Ascending aorta (tissue), 2 donors: ENCODE measurements at regions of chr3 and their contacts with region 1.

Region 1: DNA sequence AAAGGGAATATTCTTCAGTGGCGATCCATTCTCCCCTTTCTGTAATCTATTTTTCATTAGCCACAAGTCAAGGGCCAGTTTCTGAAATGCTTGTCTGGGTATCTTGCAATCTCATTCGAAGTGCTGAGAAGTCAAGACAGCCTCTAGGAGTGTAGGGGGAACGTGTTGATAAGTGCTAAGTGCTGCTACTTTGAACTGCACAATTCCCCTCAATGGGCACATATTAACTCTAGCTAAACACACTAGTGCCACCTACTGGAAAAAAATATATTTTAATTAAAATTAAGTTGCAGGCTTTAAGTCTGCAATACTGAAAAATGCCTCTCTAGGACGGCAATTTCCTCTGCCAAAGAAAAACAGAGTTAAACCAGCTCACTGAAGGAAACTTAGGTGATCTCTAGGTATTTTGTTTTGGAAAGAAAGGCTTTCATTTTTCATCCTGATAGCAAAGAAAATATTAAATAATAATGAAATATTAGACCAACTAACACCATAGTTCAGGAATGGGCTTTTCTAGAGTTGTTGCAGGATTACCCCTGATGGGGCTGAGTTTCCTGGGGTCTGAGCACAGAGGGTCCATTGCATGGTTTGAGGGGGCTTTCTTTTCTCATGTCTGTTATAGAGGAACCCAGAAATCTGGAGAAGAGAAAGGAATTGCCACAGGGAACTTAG is 181.9 kb upstream of the KBTBD8 start:
- DNase-seq: no peak
- H3K4me3 ChIP-seq: no peak overlapping the region
- H3K27ac ChIP-seq: no peak overlapping the region
- H3K4me1 ChIP-seq: no peaks in the 10 kb centered on the region
- H3K27me3 ChIP-seq: no peaks in the 10 kb centered on the region
- CTCF ChIP-seq: peak; percentile 48 to 73 (median 65)

Region 2: GRCh38 chr3:66253790-66254620 is 562.2 kb before region 1 on chr3:
- intact Hi-C with region 1: loop called (anchors 1 kb)
- DNase-seq: no peak
- H3K4me3 ChIP-seq: no peak overlapping the region
- H3K27ac ChIP-seq: no peak overlapping the region
- H3K4me1 ChIP-seq: no peaks in the 10 kb centered on the region
- H3K27me3 ChIP-seq: no peaks in the 10 kb centered on the region
- CTCF ChIP-seq: peak; percentile 68 to 81 (median 75)

Region 3: DNA sequence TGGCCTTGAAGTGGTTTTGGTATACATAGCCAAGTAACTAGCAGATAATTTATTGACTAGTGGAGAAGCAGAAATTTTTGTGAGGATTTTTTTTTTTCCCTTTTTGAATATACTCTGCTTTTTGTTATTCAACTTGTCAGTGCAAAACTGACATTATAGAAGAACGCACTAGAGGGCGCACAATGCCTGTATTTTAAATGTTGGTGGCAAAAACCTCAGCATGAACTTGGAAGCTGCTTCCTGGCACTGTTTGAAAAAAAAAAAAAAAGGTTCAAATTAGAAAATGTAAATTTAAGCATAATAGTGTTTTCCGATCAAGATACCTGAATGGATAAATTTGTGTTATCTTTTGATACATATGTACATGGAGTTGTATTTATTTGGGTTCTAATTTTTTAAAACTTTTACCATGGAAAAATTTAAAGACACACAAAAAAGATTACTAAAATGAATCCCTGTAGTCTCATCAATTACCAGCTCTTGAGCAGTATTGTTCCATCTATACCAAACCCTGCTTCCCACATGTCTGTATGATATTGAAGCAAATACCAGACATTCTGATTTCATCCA is 539.4 kb before region 1 on chr3:
- intact Hi-C with region 1: loop called (anchors 2 kb)
- DNase-seq: peak in 1 of 2 donors; percentile 81
- H3K4me3 ChIP-seq: no peak overlapping the region
- H3K27ac ChIP-seq: no peak overlapping the region
- H3K4me1 ChIP-seq: no peaks in the 10 kb centered on the region
- H3K27me3 ChIP-seq: no peaks in the 10 kb centered on the region
- CTCF ChIP-seq: peak; percentile 55 to 67 (median 56)